ENCODE measurements at regions of chrX and their contacts with region 1.

Region 1: GRCh38 chrX:19739683-19740082 is 147.7 kb downstream of the SH3KBP1 start:
- DNase-seq: no peak
- ATAC-seq: no peak

Region 2: DNA sequence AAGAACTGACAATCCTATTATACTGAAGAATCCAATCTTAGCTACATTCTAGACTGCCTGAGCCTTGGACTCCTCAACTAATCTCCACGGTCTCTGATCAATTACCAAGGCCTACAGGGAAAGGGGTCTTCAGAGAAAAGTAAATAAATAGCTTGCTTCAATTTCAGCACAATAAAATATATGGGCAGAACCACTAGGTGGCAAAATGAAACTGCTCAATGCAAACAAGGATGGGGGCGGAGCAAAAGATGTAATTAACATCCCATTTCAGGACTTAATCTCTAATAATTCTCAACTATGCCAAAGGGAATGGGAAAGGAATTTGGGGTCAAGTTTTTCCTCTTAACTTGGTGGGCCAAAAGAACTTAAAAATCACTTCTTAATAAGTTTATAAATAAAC is 146.0 kb before region 1 on chrX:
- intact Hi-C with region 1: loop called (anchors 5 kb)
- DNase-seq: no peak
- ATAC-seq: no peak